T-cell (primary cell): ENCODE measurements at regions of chrX and their contacts with region 1.

Region 1: GRCh38 chrX:130039847-130040246 is 57.4 kb downstream of the BCORL1 start:
- DNase-seq: no peak
- ATAC-seq: no peak
- H3K4me3 ChIP-seq: no peak overlapping the region
- H3K4me3 Mint-ChIP-seq: no peak overlapping the region
- H3K27ac ChIP-seq: no peak overlapping the region
- H3K27ac Mint-ChIP-seq: no peak overlapping the region
- H3K4me1 ChIP-seq: no peaks in the 10 kb centered on the region
- H3K4me1 Mint-ChIP-seq: no peaks in the 10 kb centered on the region
- H3K27me3 ChIP-seq: no peaks in the 10 kb centered on the region
- H3K27me3 Mint-ChIP-seq: no peaks in the 10 kb centered on the region

Region 2: GRCh38 chrX:129577473-129577872 is 462.4 kb before region 1 on chrX:
- CTCF ChIA-PET with region 1: no interaction called
- POLR2A ChIA-PET with region 1: no interaction called
- DNase-seq: no peak
- ATAC-seq: no peak
- H3K4me3 ChIP-seq: no peak overlapping the region
- H3K4me3 Mint-ChIP-seq: no peak overlapping the region
- H3K27ac ChIP-seq: no peak overlapping the region
- H3K27ac Mint-ChIP-seq: no peak overlapping the region
- H3K4me1 ChIP-seq: no peaks in the 10 kb centered on the region
- H3K4me1 Mint-ChIP-seq: no peaks in the 10 kb centered on the region
- H3K27me3 ChIP-seq: no peaks in the 10 kb centered on the region
- H3K27me3 Mint-ChIP-seq: peaks cover 0 to 7% of the 10 kb centered on the region in 2 donors

Region 3: GRCh38 chrX:129599499-129599898 is 440.3 kb before region 1 on chrX:
- CTCF ChIA-PET with region 1: interaction called in 1 of 2 experiments, 10 read pairs
- POLR2A ChIA-PET with region 1: no interaction called
- DNase-seq: no peak
- ATAC-seq: no peak
- H3K4me3 ChIP-seq: no peak overlapping the region
- H3K4me3 Mint-ChIP-seq: no peak overlapping the region
- H3K27ac ChIP-seq: no peak overlapping the region
- H3K27ac Mint-ChIP-seq: no peak overlapping the region
- H3K4me1 ChIP-seq: peaks cover under 1 to 9% of the 10 kb centered on the region in 2 experiments
- H3K4me1 Mint-ChIP-seq: peaks cover 7 to 21% (median 16%) of the 10 kb centered on the region in 3 donors
- H3K27me3 ChIP-seq: no peaks in the 10 kb centered on the region
- H3K27me3 Mint-ChIP-seq: peaks cover 0 to 13% of the 10 kb centered on the region in 2 donors

Region 4: GRCh38 chrX:130165703-130166502 is 126.1 kb after region 1 on chrX and contains the start of gene AIFM1:
- CTCF ChIA-PET with region 1: no interaction called
- POLR2A ChIA-PET with region 1: no interaction called
- DNase-seq: peak; percentile 69 to 92 (median 82)
- ATAC-seq: peak; percentile 90 to 92 (median 92)
- H3K4me3 ChIP-seq: peak within 1 kb of the TSS; percentile 54 to 73
- H3K4me3 Mint-ChIP-seq: peak within 1 kb of the TSS; percentile 88 to 94 (median 94)
- H3K27ac ChIP-seq: peak within 1 kb of the TSS; percentile 75
- H3K27ac Mint-ChIP-seq: peak within 1 kb of the TSS; percentile 91 to 93
- H3K4me1 ChIP-seq: peaks cover 8 to 19% of the 10 kb centered on the region in 2 experiments
- H3K4me1 Mint-ChIP-seq: peaks cover 34 to 45% (median 40%) of the 10 kb centered on the region in 3 donors
- H3K27me3 ChIP-seq: no peaks in the 10 kb centered on the region
- H3K27me3 Mint-ChIP-seq: peaks cover 0 to 4% of the 10 kb centered on the region in 2 donors
- total RNA-seq, gene AIFM1: 11.2 to 25.0 (median 23.6) TPM

Region 5: GRCh38 chrX:130216320-130216719 is 176.5 kb after region 1 on chrX:
- CTCF ChIA-PET with region 1: no interaction called
- POLR2A ChIA-PET with region 1: no interaction called
- DNase-seq: peak in 1 of 35 experiments; percentile 2
- ATAC-seq: no peak
- H3K4me3 ChIP-seq: no peak overlapping the region
- H3K4me3 Mint-ChIP-seq: no peak overlapping the region
- H3K27ac ChIP-seq: no peak overlapping the region
- H3K27ac Mint-ChIP-seq: no peak overlapping the region
- H3K4me1 ChIP-seq: no peaks in the 10 kb centered on the region
- H3K4me1 Mint-ChIP-seq: peaks cover 0 to 12% (median 1%) of the 10 kb centered on the region in 3 donors
- H3K27me3 ChIP-seq: no peaks in the 10 kb centered on the region
- H3K27me3 Mint-ChIP-seq: peaks cover 0 to 5% of the 10 kb centered on the region in 2 donors